Heart right ventricle (tissue), 16 donors: ENCODE measurements at regions of chr5 and their contacts with region 1.

Region 1: GRCh38 chr5:153981905-153982605 is 56.7 kb downstream of the FAM114A2 start:
- DNase-seq: no peak
- ATAC-seq: no peak
- H3K4me3 ChIP-seq: no peak overlapping the region
- H3K27ac ChIP-seq: no peak overlapping the region
- H3K4me1 ChIP-seq: peaks cover 0 to 4% (median 0%) of the 10 kb centered on the region in 9 donors
- H3K27me3 ChIP-seq: no peaks in the 10 kb centered on the region
- CTCF ChIP-seq: no peak

Region 2: DNA sequence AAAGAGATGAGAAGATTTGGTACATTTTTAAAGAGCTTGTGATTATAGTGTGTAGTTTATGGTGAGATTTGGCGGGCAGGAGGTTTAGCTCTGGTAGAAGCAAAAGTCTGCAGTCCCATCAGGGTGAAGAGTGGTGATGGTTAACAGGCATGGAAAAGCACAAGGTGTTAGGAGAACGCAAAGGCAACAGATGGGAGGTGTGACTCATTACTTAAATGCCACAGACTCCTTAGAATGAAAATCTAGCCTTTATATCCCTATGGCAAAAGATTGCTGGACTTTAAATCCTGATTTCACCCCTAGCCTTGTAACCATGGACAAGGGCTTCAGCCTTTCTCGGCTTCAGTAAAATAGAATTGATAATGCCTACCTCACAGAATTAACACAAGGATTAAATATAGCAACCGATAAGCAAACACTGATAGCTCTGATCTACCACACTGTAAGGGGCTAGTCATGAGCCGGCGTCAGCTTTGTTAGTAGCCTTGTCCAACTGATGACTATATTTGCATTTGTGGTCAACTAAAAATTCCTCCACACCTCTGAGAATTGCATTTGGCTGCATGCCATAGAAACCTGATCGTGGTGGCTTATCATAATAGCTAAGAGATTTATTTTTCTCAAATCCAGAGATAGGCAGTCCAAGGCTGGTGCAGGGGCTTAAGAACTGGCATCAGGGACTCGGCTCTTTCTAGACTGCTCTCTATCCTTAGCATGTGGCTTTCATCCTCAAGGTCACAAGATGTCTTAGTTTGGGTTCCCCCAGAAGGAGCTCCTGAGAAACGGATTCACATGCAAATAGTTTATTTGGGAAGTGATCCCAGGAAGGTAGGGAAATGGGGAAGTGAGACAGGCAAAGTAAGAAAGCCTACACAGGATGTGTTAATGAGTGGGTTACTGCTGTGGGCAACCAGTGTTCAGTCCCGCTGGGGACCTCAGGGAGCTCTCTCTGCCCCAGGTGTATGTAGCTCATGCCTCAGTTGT is 76.3 kb after region 1 on chr5:
- intact Hi-C with region 1: loop called in 2 of 10 experiments (anchors 10 kb)
- DNase-seq: no peak
- ATAC-seq: peak in 6 of 8 donors; percentile 18 to 61 (median 40)
- H3K4me3 ChIP-seq: no peak overlapping the region
- H3K27ac ChIP-seq: no peak overlapping the region
- H3K4me1 ChIP-seq: peaks cover 3 to 25% (median 15%) of the 10 kb centered on the region in 9 donors
- H3K27me3 ChIP-seq: no peaks in the 10 kb centered on the region
- CTCF ChIP-seq: no peak